Naive thymus-derived CD4-positive, alpha-beta T cell (primary cell): ENCODE measurements at regions of chr15 and their contacts with region 1.

Region 1: GRCh38 chr15:83108266-83109226 is 1.1 kb downstream of the TM6SF1 start:
- DNase-seq: peak in 3 of 9 donors; percentile 15 to 30 (median 19)
- ATAC-seq: peak; percentile 89
- H3K4me3 ChIP-seq: peak overlapping the region; percentile 22
- H3K4me3 Mint-ChIP-seq: peak overlapping the region; percentile 68 to 97 (median 76)
- H3K27ac ChIP-seq: no peak overlapping the region
- H3K27ac Mint-ChIP-seq: peak overlapping the region in 1 of 9 donors; percentile 90
- H3K4me1 ChIP-seq: peaks cover 0 to 10% of the 10 kb centered on the region in 2 donors
- H3K4me1 Mint-ChIP-seq: peaks cover 11 to 38% (median 17%) of the 10 kb centered on the region in 7 donors
- H3K27me3 ChIP-seq: no peaks in the 10 kb centered on the region
- H3K27me3 Mint-ChIP-seq: peaks cover 21 to 59% (median 53%) of the 10 kb centered on the region in 5 donors

Region 2: DNA sequence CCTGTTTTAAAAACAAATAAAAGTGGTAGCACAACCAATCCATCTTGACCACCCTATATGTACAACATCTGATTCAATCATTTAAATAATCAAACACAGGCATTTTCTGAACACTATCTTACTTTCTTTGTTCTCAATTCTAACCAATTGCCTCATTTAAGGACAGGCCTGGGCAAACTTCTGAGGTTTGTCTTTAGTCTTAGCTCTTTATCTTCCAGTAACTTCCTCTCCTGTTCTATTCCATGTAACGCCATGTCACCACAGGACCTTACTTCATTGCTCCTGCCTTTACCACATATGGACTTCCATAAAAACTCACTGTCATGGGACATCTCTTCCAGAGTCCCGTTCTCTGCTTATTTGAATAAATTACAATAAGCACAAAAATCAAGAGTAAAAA is 84.2 kb after region 1 on chr15:
- CTCF ChIA-PET with region 1: no interaction called
- POLR2A ChIA-PET with region 1: no interaction called
- intact Hi-C with region 1: no loop called
- DNase-seq: no peak
- ATAC-seq: no peak
- H3K4me3 ChIP-seq: no peak overlapping the region
- H3K4me3 Mint-ChIP-seq: no peak overlapping the region
- H3K27ac ChIP-seq: no peak overlapping the region
- H3K27ac Mint-ChIP-seq: no peak overlapping the region
- H3K4me1 ChIP-seq: no peaks in the 10 kb centered on the region
- H3K4me1 Mint-ChIP-seq: peaks cover 0 to 5% (median 0%) of the 10 kb centered on the region in 7 donors
- H3K27me3 ChIP-seq: peaks cover 0 to 3% of the 10 kb centered on the region in 2 donors
- H3K27me3 Mint-ChIP-seq: peaks cover 12 to 57% (median 19%) of the 10 kb centered on the region in 5 donors

Region 3: DNA sequence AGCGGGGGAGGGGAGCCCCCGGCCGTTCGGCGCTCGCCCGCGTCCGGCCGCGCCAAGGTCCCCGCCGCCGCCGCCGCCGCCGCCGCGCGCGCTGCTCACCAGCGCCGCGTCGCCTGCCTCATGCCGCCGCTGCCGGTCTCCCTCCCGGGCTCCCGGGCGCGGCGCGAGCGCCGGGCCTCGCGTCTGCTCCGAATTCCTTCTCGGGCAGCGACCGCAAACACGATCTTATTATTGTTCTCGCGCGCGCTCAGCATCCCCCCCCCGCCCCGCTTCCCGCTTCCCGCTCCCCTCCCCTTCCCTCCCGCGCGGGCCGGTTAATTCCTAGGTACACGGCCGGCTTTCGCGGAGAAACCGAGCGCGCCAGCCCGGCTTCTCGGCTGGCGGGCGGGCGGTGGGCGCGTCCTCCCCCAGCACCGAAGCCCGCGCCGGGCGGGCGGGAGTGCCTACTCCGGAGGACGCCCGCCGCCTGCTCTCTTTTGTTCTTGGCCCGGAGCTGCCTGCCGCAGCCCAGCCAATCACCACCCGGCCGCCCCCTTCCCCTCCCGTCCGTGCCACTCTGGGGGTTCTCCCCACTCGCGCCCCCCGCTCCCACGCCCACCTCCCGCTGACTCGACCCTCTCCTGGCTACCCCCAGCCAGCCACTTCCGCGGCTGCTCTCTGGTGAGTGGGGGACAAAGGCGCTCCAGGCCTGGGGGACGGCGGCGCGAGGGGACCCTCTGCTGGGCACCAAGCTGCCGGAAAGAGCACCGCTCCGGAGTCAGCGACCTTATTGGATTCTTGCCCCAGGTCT is 99.3 kb after region 1 on chr15 and contains the start of gene HDGFL3:
- CTCF ChIA-PET with region 1: no interaction called
- POLR2A ChIA-PET with region 1: no interaction called
- intact Hi-C with region 1: loop called in 1 of 2 experiments (anchors 1 kb)
- DNase-seq: peak in 6 of 9 donors; percentile 5 to 53 (median 24)
- ATAC-seq: peak; percentile 55
- H3K4me3 ChIP-seq: no peak within 1 kb of the TSS
- H3K4me3 Mint-ChIP-seq: peak within 1 kb of the TSS; percentile 85 to 97 (median 93)
- H3K27ac ChIP-seq: peak within 1 kb of the TSS; percentile 51
- H3K27ac Mint-ChIP-seq: peak within 1 kb of the TSS in 5 of 9 donors; percentile 78 to 86 (median 85)
- H3K4me1 ChIP-seq: peaks cover 0 to 3% of the 10 kb centered on the region in 2 donors
- H3K4me1 Mint-ChIP-seq: peaks cover 0 to 18% (median 7%) of the 10 kb centered on the region in 7 donors
- H3K27me3 ChIP-seq: peaks cover 3% of the 10 kb centered on the region in 2 donors
- H3K27me3 Mint-ChIP-seq: peaks cover 14 to 37% (median 19%) of the 10 kb centered on the region in 5 donors
- total RNA-seq, gene HDGFL3: 2.1 to 50.1 (median 3.6) TPM